ENCODE measurements at regions of chr5 and their contacts with region 1.

Region 1: DNA sequence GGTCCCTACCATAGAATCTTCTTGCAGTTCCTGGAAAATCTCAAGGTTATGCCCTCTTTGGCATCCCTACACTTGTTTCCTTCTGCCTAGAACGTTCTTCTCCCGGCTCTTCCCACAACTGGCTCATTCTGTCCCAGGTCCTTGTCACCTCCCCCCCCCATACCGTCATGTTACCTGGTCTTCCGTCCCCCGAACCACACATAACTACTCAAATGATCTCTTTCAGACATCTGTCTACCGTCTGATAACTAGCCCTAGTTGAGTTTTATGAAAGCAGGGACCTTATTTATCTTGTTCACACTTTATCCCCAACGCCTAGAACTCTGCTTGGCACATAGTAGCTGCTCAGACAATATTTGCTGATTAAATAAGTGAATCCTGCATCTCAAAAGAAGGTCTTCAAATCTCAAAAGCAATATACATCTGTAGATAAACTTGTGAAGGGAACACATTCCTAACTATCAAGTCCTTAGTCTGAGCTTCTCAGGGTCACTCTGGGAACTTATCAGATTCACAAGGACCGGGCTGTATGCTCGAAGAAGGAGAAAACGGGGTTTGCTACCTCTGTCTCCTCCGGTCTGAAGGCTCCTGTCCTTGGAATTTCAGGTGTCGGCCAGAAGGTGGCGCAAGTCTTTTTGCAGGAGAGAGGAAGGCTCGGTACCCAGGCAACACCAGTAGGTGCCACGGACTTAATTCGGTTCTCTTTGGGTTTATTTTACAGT is 30.0 kb downstream of the LCP2 start:
- H3K4me3 Mint-ChIP-seq: no peak overlapping the region
- H3K27ac Mint-ChIP-seq: peak overlapping the region; percentile 20
- H3K4me1 Mint-ChIP-seq: peaks cover 63% of the 10 kb centered on the region
- H3K27me3 Mint-ChIP-seq: no peaks in the 10 kb centered on the region

Region 2: DNA sequence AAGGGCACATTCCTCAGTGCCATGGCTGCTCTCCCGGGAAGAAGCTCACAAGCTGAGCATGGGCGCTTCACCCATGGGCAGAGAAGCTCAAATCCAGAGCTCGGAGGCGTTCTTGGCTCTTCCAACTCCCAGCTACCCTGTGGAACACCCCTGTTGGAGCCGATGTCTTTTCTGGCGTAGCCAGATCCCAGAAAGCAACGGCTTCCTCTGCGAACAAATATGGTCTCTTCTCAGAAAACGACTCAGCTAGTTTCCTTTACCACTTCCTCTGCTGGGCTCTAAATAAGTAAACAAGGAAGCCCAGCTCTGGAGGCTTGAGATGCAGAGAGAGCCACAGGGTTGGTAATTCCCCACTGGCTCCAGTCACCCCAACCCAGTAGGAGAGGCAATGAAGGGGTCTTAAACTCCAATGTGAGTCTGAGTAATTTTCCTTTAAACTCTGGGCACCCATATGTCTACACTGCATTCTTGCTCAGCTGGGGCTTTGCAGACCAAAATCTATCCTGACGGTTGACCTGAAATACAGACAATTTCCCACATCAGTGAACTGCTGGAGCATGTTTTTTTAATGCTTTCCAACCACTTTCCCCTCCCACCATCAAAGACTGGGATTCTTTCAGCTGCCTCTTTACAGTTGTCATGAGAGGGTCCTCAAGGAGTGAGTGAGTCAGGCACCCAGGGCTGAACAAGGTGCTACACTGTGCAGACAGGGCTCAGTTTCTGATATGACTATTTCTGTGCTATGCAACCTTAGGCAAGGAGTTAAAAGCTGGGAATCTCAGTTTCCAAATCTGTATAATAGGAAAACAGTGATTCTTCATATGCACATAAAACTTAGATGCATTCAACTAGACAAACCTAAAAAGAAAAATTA is 30.2 kb after region 1 on chr5 and contains the start of gene LCP2:
- intact Hi-C with region 1: loop called (anchors 2 kb)
- H3K4me3 Mint-ChIP-seq: peak within 1 kb of the TSS; percentile 99
- H3K27ac Mint-ChIP-seq: peak within 1 kb of the TSS; percentile 95
- H3K4me1 Mint-ChIP-seq: peaks cover 82% of the 10 kb centered on the region
- H3K27me3 Mint-ChIP-seq: no peaks in the 10 kb centered on the region

Region 3: GRCh38 chr5:170404402-170404801 is 136.8 kb after region 1 on chr5:
- intact Hi-C with region 1: loop called (anchors 5 kb)
- H3K4me3 Mint-ChIP-seq: no peak overlapping the region
- H3K27ac Mint-ChIP-seq: peak overlapping the region; percentile 34
- H3K4me1 Mint-ChIP-seq: peaks cover 24% of the 10 kb centered on the region
- H3K27me3 Mint-ChIP-seq: no peaks in the 10 kb centered on the region